Gastrocnemius medialis (tissue), 4 donors: ENCODE measurements at regions of chr6 and their contacts with region 1.

Region 1: GRCh38 chr6:137313928-137314855 is 95.0 kb upstream of the IFNGR1 start:
- DNase-seq: peak; percentile 41 to 42
- ATAC-seq: peak; percentile 66 to 87
- H3K4me3 ChIP-seq: peak overlapping the region in 3 of 4 donors; percentile 10 to 32 (median 19)
- H3K27ac ChIP-seq: peak overlapping the region in 1 of 4 donors; percentile 8
- H3K4me1 ChIP-seq: peaks cover 4 to 11% of the 10 kb centered on the region in 2 donors
- H3K27me3 ChIP-seq: no peaks in the 10 kb centered on the region
- CTCF ChIP-seq: peak; percentile 76 to 85 (median 77)
- POLR2A ChIP-seq: no peak

Region 2: DNA sequence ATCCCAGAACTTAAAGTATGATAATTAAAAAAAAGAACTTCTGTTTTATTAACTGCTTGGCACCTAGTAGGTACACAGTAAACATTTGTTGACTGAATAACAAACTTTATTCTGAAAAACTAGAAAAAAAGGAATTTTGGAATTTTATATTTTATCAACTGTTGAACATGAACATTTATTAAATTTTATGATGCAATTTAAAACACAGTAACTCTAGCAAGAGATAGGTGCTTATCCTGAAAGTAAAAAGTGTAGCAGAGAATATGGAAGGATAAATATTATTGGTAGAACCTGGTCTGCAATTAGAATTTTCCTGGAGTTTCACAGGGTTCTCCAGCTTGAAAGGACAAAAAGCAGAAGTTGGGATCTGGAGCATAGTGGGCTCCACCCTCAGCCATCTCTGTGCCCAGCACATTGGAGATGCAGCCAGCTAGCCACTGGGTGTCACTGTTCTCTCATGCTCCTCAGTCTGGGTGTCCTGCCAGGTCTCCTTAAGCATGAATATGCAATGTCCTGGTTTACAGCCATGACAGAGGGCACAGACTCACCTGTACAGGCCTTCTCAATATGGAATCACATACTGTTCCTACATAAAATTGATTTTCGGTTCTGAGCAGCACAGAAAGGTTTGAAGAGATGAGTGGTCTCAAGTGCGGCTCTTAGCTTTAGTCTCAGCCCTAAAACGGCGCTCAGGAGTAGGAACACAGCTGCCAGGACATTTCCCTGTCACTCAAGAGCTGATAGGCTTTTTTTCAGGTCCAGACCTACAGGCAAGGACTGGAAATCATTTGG is 237.7 kb before region 1 on chr6:
- in situ Hi-C with region 1: loop called in 1 of 4 experiments (anchors 5 kb)
- intact Hi-C with region 1: loop called (anchors 5 kb)
- DNase-seq: peak; percentile 28 to 60
- ATAC-seq: peak; percentile 68 to 85
- H3K4me3 ChIP-seq: no peak overlapping the region
- H3K27ac ChIP-seq: no peak overlapping the region
- H3K4me1 ChIP-seq: no peaks in the 10 kb centered on the region
- H3K27me3 ChIP-seq: no peaks in the 10 kb centered on the region
- CTCF ChIP-seq: peak; percentile 23 to 56 (median 49)
- POLR2A ChIP-seq: no peak

Region 3: DNA sequence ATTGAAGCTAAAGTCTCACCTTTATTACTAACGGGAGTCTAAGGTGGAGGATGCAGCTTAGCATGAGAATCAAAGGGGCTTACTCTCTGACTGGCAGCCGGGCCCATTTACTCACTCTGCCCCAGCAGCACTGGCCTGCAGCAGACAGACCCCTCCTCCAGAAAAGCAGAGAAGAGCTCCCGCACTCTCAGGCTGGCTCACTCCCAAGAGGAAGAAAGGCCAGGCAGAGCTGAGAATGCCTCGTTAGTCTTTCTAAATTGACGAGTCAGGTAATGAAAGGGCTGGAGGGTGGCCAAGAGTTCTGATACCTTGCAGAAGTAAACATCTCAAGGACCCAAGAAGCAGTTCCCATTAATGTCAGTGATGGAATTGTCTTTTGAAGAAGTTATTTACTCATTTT is 224.9 kb before region 1 on chr6:
- in situ Hi-C with region 1: loop called (anchors 5 to 10 kb)
- intact Hi-C with region 1: no loop called
- DNase-seq: no peak
- ATAC-seq: no peak
- H3K4me3 ChIP-seq: no peak overlapping the region
- H3K27ac ChIP-seq: no peak overlapping the region
- H3K4me1 ChIP-seq: no peaks in the 10 kb centered on the region
- H3K27me3 ChIP-seq: no peaks in the 10 kb centered on the region
- CTCF ChIP-seq: no peak
- POLR2A ChIP-seq: no peak

Region 4: DNA sequence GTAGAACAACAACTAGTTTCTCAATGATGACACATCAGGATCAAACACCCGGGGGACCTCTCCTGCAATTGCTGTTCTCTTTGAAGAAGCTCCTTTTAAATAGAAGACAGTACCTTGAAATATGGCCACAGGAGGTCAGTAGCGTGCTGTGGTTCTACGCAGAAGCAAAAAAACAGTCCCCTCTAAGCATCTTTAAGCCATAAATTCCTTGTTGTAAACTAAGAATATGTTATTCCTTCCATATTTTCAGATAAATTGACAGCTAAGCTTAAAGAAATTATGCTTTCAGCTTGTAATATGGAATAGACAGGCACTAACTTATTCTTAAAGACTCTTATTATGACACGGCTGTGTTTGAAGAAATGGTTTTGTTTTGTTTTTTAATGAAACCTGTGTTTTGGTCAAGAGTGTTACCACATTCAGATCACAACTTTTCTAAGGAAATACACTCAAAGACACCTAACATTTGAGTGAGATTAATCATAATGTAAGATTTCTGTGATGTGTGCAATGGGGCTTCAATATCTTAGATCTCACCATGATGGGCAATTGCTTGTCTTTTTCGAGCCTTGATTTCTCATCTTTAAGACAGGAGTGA is 219.7 kb before region 1 on chr6:
- in situ Hi-C with region 1: loop called in 3 of 4 experiments (anchors 5 to 10 kb)
- intact Hi-C with region 1: loop called (anchors 1 kb)
- DNase-seq: peak; percentile 49 to 70
- ATAC-seq: peak; percentile 71 to 84
- H3K4me3 ChIP-seq: no peak overlapping the region
- H3K27ac ChIP-seq: no peak overlapping the region
- H3K4me1 ChIP-seq: no peaks in the 10 kb centered on the region
- H3K27me3 ChIP-seq: no peaks in the 10 kb centered on the region
- CTCF ChIP-seq: peak; percentile 56 to 75 (median 71)
- POLR2A ChIP-seq: no peak

Region 5: GRCh38 chr6:137233911-137234863 is 80.0 kb before region 1 on chr6:
- in situ Hi-C with region 1: no loop called
- intact Hi-C with region 1: no loop called
- DNase-seq: peak in 1 of 2 donors; percentile 58
- ATAC-seq: peak; percentile 82 to 88
- H3K4me3 ChIP-seq: no peak overlapping the region
- H3K27ac ChIP-seq: peak overlapping the region; percentile 61 to 68 (median 65)
- H3K4me1 ChIP-seq: peaks cover 8 to 21% of the 10 kb centered on the region in 2 donors
- H3K27me3 ChIP-seq: no peaks in the 10 kb centered on the region
- CTCF ChIP-seq: no peak
- POLR2A ChIP-seq: no peak

Region 6: DNA sequence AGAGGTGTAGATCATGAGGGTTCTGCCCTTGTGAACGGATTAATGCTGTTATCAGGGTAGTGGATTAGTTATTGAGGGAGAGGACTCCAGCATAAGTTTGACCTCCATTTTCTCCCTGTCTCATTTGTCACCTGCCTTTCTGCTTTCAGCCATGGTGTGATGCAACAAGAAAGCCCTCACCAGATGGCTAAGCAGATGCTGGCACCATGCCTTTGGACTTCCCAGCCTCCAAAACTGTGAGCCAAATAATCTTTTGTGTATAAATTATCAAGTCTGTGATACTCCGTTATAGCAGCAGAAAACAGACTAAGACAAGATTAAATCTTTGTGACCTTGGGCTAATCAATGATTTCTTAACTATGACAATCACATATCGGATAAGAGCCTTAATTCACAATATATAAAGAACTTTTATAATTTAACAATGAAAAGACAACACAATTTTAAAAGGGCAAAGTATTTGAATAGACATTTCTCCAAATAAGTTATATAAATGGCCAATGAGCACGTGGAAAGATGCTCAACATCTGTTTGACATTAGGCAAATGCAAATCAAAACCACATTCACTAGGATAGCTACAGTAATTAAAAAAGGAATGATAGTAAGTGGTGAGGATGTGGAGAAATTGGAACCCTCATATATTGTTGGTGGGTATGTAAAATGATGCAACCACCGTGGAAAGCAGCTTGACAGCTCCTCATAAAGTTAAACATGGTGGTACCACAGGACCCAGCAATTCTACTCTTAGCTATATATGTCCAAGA is 49.7 kb before region 1 on chr6:
- in situ Hi-C with region 1: loop called in 1 of 4 experiments (anchors 5 kb)
- intact Hi-C with region 1: no loop called
- DNase-seq: peak; percentile 18 to 55
- ATAC-seq: no peak
- H3K4me3 ChIP-seq: no peak overlapping the region
- H3K27ac ChIP-seq: no peak overlapping the region
- H3K4me1 ChIP-seq: peaks cover 10 to 26% of the 10 kb centered on the region in 2 donors
- H3K27me3 ChIP-seq: no peaks in the 10 kb centered on the region
- CTCF ChIP-seq: no peak
- POLR2A ChIP-seq: no peak

Region 7: GRCh38 chr6:137271245-137272183 is 42.7 kb before region 1 on chr6:
- in situ Hi-C with region 1: loop called in 2 of 4 experiments (anchors 5 kb)
- intact Hi-C with region 1: loop called (anchors 2 kb)
- DNase-seq: no peak
- ATAC-seq: peak; percentile 56 to 81
- H3K4me3 ChIP-seq: no peak overlapping the region
- H3K27ac ChIP-seq: no peak overlapping the region
- H3K4me1 ChIP-seq: no peaks in the 10 kb centered on the region
- H3K27me3 ChIP-seq: no peaks in the 10 kb centered on the region
- CTCF ChIP-seq: peak; percentile 57 to 86 (median 79)
- POLR2A ChIP-seq: no peak